CD4-positive, alpha-beta memory T cell (primary cell): ENCODE measurements at regions of chr18 and their contacts with region 1.

Region 1: GRCh38 chr18:45967007-45967706 is at the start of gene EPG5:
- DNase-seq: peak; percentile 89 to 94 (median 91)
- H3K4me3 ChIP-seq: peak within 1 kb of the TSS; percentile 89 to 94
- H3K4me3 Mint-ChIP-seq: peak within 1 kb of the TSS; percentile 95 to 100 (median 98)
- H3K27ac ChIP-seq: peak within 1 kb of the TSS; percentile 72
- H3K27ac Mint-ChIP-seq: peak within 1 kb of the TSS; percentile 89 to 98 (median 97)
- H3K4me1 ChIP-seq: peaks cover 48% of the 10 kb centered on the region
- H3K4me1 Mint-ChIP-seq: peaks cover 31 to 55% (median 42%) of the 10 kb centered on the region in 4 donors
- H3K27me3 ChIP-seq: no peaks in the 10 kb centered on the region
- H3K27me3 Mint-ChIP-seq: no peaks in the 10 kb centered on the region
- total RNA-seq, gene EPG5: 64.3 to 69.0 TPM

Region 2: DNA sequence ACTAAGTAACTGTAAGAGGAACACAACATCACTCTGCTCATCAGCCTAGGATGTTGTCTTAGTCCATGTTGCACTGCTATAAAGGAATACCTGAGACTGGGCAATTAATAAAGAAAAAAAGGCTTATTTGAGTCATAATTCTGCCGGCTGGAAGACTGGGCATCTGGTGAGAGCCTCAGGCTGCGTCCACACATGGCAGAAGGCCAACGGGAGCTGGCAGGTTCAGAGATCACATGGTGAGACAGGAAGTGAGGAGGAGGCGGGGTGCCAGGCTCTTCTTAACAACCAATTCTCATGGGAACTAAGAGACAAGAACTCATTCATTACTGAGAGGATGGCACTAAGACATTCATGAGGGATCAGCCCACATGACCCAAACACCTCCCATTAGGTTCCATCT is 46.8 kb before region 1 on chr18:
- CTCF ChIA-PET with region 1: interaction called, 3 read pairs
- POLR2A ChIA-PET with region 1: no interaction called
- intact Hi-C with region 1: loop called (anchors 5 kb)
- DNase-seq: no peak
- H3K4me3 ChIP-seq: no peak overlapping the region
- H3K4me3 Mint-ChIP-seq: no peak overlapping the region
- H3K27ac ChIP-seq: no peak overlapping the region
- H3K27ac Mint-ChIP-seq: peak overlapping the region in 4 of 7 donors; percentile 31 to 81 (median 46)
- H3K4me1 ChIP-seq: peaks cover 10% of the 10 kb centered on the region
- H3K4me1 Mint-ChIP-seq: peaks cover 15 to 24% (median 18%) of the 10 kb centered on the region in 4 donors
- H3K27me3 ChIP-seq: no peaks in the 10 kb centered on the region
- H3K27me3 Mint-ChIP-seq: no peaks in the 10 kb centered on the region